ENCODE measurements at regions of chr2 and their contacts with region 1.

Region 1: GRCh38 chr2:24749069-24749691 is 44.0 kb downstream of the PTRHD1 start:
- DNase-seq: no peak
- ATAC-seq: no peak
- H3K4me3 ChIP-seq: no peak overlapping the region
- H3K4me3 Mint-ChIP-seq: no peak overlapping the region
- H3K27ac ChIP-seq: no peak overlapping the region
- H3K27ac Mint-ChIP-seq: peak overlapping the region; percentile 43 to 47
- H3K4me1 ChIP-seq: peaks cover 24% of the 10 kb centered on the region
- H3K4me1 Mint-ChIP-seq: peaks cover 37 to 40% of the 10 kb centered on the region in 2 donors
- H3K27me3 ChIP-seq: no peaks in the 10 kb centered on the region
- H3K27me3 Mint-ChIP-seq: no peaks in the 10 kb centered on the region
- CTCF ChIP-seq: no peak

Region 2: DNA sequence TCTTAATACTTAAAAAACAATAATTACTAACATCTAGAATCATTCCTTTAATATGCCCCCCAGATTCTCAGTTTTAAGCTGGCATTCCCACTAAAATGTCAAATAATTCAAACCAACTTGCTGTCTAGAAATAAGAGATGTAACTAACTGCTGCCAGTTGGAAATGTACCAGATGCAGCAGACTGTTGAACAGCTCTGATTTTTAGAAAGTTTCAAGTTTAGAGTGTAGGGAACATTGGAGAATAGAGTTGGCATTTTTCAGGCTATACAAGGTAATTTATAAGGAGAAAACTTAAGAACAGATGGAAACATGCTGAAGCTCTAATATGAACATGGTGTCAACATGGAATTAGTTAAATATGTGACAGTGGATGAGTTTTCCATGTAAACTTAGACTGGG is 57.4 kb before region 1 on chr2:
- intact Hi-C with region 1: loop called (anchors 5 kb)
- DNase-seq: no peak
- ATAC-seq: no peak
- H3K4me3 ChIP-seq: no peak overlapping the region
- H3K4me3 Mint-ChIP-seq: no peak overlapping the region
- H3K27ac ChIP-seq: no peak overlapping the region
- H3K27ac Mint-ChIP-seq: peak overlapping the region in 1 of 2 donors; percentile 12
- H3K4me1 ChIP-seq: no peaks in the 10 kb centered on the region
- H3K4me1 Mint-ChIP-seq: peaks cover 15 to 29% of the 10 kb centered on the region in 2 donors
- H3K27me3 ChIP-seq: no peaks in the 10 kb centered on the region
- H3K27me3 Mint-ChIP-seq: no peaks in the 10 kb centered on the region
- CTCF ChIP-seq: no peak

Measured in natural killer cell (primary cell).